HEK293T (cell line): ENCODE measurements at regions of chr1 and their contacts with region 1.

Region 1: GRCh38 chr1:26417111-26417759 is 6.6 kb downstream of the LIN28A start:
- DNase-seq: peak; percentile 80

Region 2: DNA sequence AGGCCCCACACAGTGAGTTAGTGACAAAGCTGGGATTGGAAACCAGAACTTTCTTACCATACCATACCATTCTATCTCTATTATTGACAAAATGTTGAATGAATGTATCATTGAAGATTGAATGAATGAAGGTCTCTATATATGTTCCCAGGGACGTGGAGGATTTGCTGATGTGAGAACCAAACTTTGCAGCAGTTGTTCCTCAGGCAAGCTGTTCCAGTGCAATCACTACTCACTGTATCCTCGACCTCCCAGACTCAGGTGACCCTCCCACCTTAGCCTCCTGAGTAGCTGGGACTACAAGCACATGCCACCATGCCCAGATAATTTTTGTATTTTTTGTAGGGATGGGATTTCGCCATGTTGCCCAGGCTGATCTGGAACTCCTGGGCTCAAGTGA is 18.2 kb before region 1 on chr1:
- CTCF ChIA-PET with region 1: interaction called, 14 read pairs
- POLR2A ChIA-PET with region 1: no interaction called
- DNase-seq: no peak

Region 3: DNA sequence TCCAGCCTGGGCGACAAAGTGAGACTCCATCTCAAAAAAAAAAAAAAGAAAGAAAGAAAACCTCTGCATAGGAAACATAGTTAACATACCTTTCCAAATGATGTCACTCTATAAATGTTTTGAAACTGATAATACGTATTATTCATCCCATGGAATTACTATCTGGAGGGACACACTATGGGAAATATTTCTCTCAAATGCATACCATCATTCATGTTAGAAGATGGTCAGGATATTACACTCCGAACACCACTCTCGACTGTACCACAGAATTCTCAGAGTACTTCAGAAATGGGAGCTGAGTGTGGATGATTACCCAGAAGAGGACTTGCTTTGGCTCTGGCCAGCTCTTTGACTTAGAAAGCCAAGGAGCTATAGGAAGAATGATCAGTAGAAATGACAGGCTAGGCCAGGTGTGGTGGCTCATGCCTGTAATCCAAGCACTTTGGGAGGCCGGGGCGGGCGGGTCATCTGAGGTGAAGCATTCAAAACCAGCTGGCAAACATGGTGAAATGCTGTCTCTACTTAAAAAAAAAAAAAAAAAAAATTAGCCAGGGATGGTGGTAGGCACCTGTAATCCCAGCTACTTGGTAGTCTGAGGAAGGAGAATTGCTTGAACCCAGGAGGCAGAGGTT is 11.8 kb before region 1 on chr1:
- CTCF ChIA-PET with region 1: interaction called, 19 read pairs
- POLR2A ChIA-PET with region 1: interaction called, 4 read pairs
- DNase-seq: no peak